ENCODE measurements at regions of chr6 and their contacts with region 1.

Region 1: GRCh38 chr6:42879372-42880239 is at the start of gene RPL7L1:
- DNase-seq: peak; percentile 87 to 91
- ATAC-seq: peak; percentile 99
- H3K4me3 ChIP-seq: peak within 1 kb of the TSS; percentile 77 to 81
- H3K27ac ChIP-seq: peak within 1 kb of the TSS; percentile 53 to 91
- H3K4me1 ChIP-seq: no peaks in the 10 kb centered on the region
- H3K27me3 ChIP-seq: no peaks in the 10 kb centered on the region
- total RNA-seq, gene RPL7L1: 57.8 to 59.0 TPM

Region 2: DNA sequence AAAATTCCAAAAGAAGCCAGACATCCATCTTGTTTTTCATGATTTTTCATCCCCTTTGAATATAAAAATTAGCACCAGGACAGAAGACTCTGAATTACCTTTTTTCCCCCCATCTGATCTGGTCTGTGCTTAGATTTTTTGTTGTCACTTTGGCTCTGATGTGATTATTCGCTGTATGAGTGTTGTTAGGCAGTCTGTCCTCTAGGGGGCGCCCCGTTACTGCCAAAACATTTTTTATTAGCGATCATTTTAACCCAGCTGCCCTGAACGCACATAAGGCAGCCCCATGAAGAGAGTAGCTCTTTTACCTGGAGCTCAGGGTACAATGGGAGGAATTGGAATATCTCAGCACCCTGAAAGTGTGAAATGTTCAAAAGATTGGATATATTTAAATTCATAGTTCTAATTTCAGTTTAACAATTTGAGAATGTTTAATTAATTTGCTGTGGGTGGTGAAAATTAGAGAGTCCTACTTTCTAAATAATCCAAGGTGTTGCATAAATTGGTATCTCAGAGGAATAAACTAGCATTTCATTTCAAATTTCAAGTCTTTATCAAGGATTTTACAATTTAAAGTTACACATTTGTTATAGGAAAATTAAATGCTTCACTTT is 218.0 kb before region 1 on chr6:
- intact Hi-C with region 1: loop called (anchors 1 to 5 kb)
- DNase-seq: peak; percentile 82 to 90
- ATAC-seq: peak; percentile 90
- H3K4me3 ChIP-seq: no peak overlapping the region
- H3K27ac ChIP-seq: no peak overlapping the region
- H3K4me1 ChIP-seq: no peaks in the 10 kb centered on the region
- H3K27me3 ChIP-seq: no peaks in the 10 kb centered on the region

Region 3: GRCh38 chr6:42726485-42727086 is 153.0 kb before region 1 on chr6:
- intact Hi-C with region 1: loop called (anchors 5 kb)
- DNase-seq: peak; percentile 79 to 81
- ATAC-seq: peak; percentile 96
- H3K4me3 ChIP-seq: peak overlapping the region; percentile 38 to 72
- H3K27ac ChIP-seq: peak overlapping the region; percentile 14 to 39
- H3K4me1 ChIP-seq: peaks cover 0 to 4% of the 10 kb centered on the region in 2 donors
- H3K27me3 ChIP-seq: no peaks in the 10 kb centered on the region

Region 4: GRCh38 chr6:42745707-42746462 is 133.7 kb before region 1 on chr6 and contains the start of gene TBCC:
- intact Hi-C with region 1: loop called (anchors 5 kb)
- DNase-seq: peak; percentile 97
- ATAC-seq: peak; percentile 96
- H3K4me3 ChIP-seq: peak within 1 kb of the TSS; percentile 51 to 83
- H3K27ac ChIP-seq: peak within 1 kb of the TSS; percentile 37 to 86
- H3K4me1 ChIP-seq: peaks cover 0 to 3% of the 10 kb centered on the region in 2 donors
- H3K27me3 ChIP-seq: no peaks in the 10 kb centered on the region
- total RNA-seq, gene TBCC: 16.1 to 16.8 TPM

Region 5: DNA sequence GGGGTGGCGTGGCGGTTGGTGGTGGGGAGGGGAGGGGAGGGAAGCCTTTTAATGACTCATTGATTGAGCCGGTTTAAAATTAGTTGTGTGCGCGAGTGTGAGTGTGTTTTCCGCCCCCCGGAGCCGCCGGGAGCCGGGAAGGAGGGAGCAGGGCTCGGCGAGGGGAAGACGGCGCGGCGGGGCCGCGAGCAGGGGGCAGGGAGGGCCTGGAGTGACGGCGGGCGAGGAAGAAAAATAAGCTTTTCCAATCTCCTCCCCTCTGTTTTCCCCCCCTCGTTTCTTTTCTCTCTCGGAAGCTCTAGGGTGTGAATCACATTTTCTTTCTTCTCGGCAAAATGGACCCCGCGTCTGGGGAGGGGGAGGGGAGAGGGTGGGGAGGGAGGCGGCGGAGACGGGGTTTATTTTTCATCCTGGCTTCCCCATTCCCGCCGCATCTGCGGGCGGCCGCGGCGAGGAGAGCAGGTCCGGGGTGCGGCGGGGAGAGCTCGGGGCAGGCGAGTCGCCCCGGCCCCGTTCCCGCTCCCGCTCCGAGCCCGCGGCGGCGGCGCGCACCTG is 96.9 kb before region 1 on chr6:
- intact Hi-C with region 1: loop called in 1 of 2 experiments (anchors 5 kb)
- DNase-seq: peak; percentile 90 to 94
- ATAC-seq: peak; percentile 90
- H3K4me3 ChIP-seq: peak overlapping the region; percentile 74 to 99
- H3K27ac ChIP-seq: peak overlapping the region; percentile 100
- H3K4me1 ChIP-seq: peaks cover 0 to 3% of the 10 kb centered on the region in 2 donors
- H3K27me3 ChIP-seq: no peaks in the 10 kb centered on the region

Region 6: DNA sequence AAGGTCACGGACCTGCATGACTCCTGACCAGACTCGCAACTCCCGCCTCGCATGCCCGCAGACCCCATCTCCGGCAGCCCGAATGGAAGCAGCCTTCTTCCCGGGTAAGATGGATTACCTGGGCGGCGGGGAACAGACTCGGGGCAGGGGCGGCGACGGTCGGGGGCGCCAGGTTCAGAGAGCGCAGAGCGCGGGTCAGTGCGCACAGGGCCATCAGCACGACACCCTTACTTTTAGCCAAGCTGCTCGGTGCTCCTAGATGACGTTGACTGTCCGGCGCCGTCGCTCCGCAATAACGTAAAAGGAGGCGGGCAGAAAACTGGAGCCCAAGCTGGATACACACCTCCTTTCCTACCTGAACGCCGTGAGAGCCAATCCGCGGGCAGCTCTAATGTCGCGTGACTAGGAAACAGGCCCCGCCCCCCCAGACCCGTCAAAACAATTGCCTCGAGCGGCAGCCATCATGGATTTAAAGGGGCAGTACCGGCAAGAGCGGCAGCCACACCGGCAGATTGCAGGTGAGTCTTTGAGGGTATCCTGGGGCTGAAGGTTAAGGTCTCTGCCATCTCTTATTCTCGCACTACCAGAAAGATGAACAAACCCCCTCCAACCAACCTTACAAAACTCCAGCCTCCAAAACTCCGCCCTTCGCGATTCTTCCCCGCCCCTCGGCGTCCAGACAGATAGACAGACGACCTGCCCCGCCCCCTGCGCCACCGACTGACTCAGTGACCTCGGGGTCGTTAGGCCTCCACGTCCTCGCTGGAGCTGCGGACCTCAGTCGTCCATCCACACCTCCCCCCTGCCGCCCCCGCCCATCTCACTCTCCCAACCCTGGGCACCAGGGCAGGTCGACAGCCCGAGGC is 179.8 kb after region 1 on chr6 and contains the starts of genes KLC4 and MRPL2:
- intact Hi-C with region 1: no loop called
- DNase-seq: peak; percentile 99
- ATAC-seq: peak; percentile 98
- H3K4me3 ChIP-seq: peak within 1 kb of the TSS; percentile 71 to 79
- H3K27ac ChIP-seq: peak within 1 kb of the TSS in 1 of 2 donors; percentile 28
- H3K4me1 ChIP-seq: no peaks in the 10 kb centered on the region
- H3K27me3 ChIP-seq: no peaks in the 10 kb centered on the region
- total RNA-seq, gene KLC4: 20.1 to 35.0 TPM
- total RNA-seq, gene MRPL2: 30.4 to 33.6 TPM

Measured in aorta (tissue), 5 donors.